Panc1 (cell line): ENCODE measurements at regions of chr10 and their contacts with region 1.

Region 1: GRCh38 chr10:31581741-31582313 is 262.8 kb downstream of the ZEB1 start:
- DNase-seq: no peak
- ATAC-seq: no peak
- H3K4me3 ChIP-seq: no peak overlapping the region
- H3K27ac ChIP-seq: no peak overlapping the region
- H3K4me1 ChIP-seq: peaks cover 16% of the 10 kb centered on the region
- H3K27me3 ChIP-seq: no peaks in the 10 kb centered on the region
- CTCF ChIP-seq: no peak

Region 2: GRCh38 chr10:31549896-31550295 is 31.9 kb before region 1 on chr10:
- CTCF ChIA-PET with region 1: no interaction called
- POLR2A ChIA-PET with region 1: interaction called, 11 read pairs
- in situ Hi-C with region 1: no loop called
- intact Hi-C with region 1: no loop called
- DNase-seq: no peak
- ATAC-seq: no peak
- H3K4me3 ChIP-seq: no peak overlapping the region
- H3K27ac ChIP-seq: no peak overlapping the region
- H3K4me1 ChIP-seq: no peaks in the 10 kb centered on the region
- H3K27me3 ChIP-seq: no peaks in the 10 kb centered on the region
- CTCF ChIP-seq: no peak

Region 3: DNA sequence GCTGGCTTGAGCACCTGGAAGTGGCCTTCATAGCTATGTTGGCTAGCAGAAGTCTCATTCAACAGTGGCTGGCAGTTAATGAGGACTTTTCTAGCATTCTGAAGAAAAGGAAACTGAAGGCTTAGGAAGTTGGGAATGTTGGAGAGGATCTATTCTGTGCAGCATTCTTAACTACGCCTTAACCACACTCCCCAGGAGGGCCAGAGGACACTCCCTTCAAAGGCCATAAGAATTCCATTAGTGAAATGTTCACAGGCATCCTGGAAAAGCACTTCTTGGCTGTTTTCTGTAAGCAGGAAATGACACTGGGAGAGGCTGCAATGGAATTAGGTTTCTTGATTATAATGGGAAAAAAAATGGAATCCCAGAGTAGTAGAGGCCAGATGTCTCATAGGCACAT is 157.9 kb after region 1 on chr10:
- CTCF ChIA-PET with region 1: no interaction called
- POLR2A ChIA-PET with region 1: no interaction called
- in situ Hi-C with region 1: no loop called
- intact Hi-C with region 1: no loop called
- DNase-seq: no peak
- ATAC-seq: no peak
- H3K4me3 ChIP-seq: no peak overlapping the region
- H3K27ac ChIP-seq: no peak overlapping the region
- H3K4me1 ChIP-seq: no peaks in the 10 kb centered on the region
- H3K27me3 ChIP-seq: no peaks in the 10 kb centered on the region
- CTCF ChIP-seq: no peak